Heart right ventricle (tissue), 16 donors: ENCODE measurements at regions of chr16 and their contacts with region 1.

Region 1: DNA sequence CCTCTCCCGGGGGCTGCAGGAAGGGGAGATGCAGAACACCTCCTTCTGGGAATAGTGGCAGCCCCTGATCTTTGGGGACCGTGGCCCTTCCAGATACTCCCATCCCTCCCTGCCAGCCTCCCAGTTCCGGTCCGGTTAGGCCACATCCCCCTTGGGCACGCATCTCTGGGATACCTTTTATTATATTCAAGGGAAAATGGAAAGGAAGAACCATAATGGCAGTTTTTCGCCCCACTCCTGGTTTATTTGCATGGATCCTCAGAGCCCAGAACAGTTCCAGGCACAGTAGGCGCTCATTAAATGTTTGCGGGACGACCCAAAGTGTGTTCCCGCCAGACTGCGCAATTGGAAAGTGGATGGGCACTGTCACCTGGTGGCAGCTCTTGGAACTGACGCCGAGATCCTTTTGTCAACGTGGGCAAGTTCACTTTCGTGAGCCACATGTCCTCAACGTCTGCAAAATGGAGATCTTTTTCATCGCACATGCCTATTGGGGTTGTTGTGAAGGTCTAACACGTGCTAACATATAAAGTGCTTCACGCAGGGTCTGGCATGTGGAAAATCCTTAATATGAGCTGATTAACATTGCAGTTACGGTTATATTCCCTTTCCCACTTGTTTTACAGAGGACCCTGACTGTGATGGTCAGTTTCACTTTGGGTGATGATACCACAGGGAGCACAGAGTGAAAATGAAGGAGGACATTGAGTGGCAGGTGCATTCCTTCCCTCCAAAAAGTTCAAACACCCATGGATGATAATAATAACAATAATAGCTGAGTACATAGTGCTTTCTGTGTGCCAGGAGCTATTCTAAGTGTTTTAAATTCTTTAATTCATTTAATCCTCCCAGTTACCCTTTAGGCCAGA is 1.7 kb upstream of the GPRC5B start:
- DNase-seq: peak; percentile 77 to 78
- ATAC-seq: peak; percentile 22 to 69 (median 42)
- H3K4me3 ChIP-seq: peak overlapping the region in 8 of 10 donors; percentile 74 to 97 (median 88)
- H3K27ac ChIP-seq: no peak overlapping the region
- H3K4me1 ChIP-seq: peaks cover 0 to 34% (median 26%) of the 10 kb centered on the region in 9 donors
- H3K27me3 ChIP-seq: peaks cover 0 to 39% (median 0%) of the 10 kb centered on the region in 7 donors
- CTCF ChIP-seq: peak; percentile 99 to 100 (median 100)

Region 2: GRCh38 chr16:19583665-19584300 is 302.5 kb before region 1 on chr16:
- intact Hi-C with region 1: loop called in 1 of 10 experiments (anchors 5 kb)
- DNase-seq: peak in 1 of 2 donors; percentile 23
- ATAC-seq: peak in 3 of 8 donors; percentile 38 to 54 (median 47)
- H3K4me3 ChIP-seq: no peak overlapping the region
- H3K27ac ChIP-seq: no peak overlapping the region
- H3K4me1 ChIP-seq: peaks cover 0 to 9% (median 0%) of the 10 kb centered on the region in 9 donors
- H3K27me3 ChIP-seq: no peaks in the 10 kb centered on the region
- CTCF ChIP-seq: peak; percentile 48 to 88 (median 82)

Region 3: GRCh38 chr16:19645557-19645981 is 240.7 kb before region 1 on chr16:
- intact Hi-C with region 1: loop called in 1 of 10 experiments (anchors 5 kb)
- DNase-seq: peak; percentile 71 to 77
- ATAC-seq: peak; percentile 74 to 91 (median 82)
- H3K4me3 ChIP-seq: peak overlapping the region in 9 of 10 donors; percentile 4 to 38 (median 31)
- H3K27ac ChIP-seq: peak overlapping the region; percentile 40 to 90 (median 77)
- H3K4me1 ChIP-seq: peaks cover 5 to 37% (median 14%) of the 10 kb centered on the region in 9 donors
- H3K27me3 ChIP-seq: no peaks in the 10 kb centered on the region
- CTCF ChIP-seq: no peak

Region 4: DNA sequence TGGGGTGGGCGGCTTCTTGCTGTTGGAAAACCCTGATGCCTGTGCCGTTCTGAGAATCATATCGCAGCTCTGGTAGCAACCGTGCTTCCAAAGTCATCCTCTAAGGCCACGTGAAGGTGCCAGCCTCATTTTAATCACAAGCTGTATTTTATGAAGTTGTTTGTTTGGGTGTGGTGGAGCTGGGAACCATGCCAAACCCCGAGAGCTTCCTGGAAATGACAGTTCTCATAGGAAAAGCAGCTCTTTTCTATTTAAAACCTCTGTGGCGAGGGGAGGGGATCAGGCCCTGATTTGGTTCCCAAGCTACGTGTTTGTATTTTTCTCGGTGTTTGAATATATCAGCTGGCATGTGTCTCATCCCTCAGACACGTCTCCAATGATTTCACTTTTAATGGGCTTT is 190.0 kb before region 1 on chr16:
- intact Hi-C with region 1: loop called in 1 of 10 experiments (anchors 2 kb)
- DNase-seq: peak; percentile 71 to 92
- ATAC-seq: peak; percentile 56 to 78 (median 68)
- H3K4me3 ChIP-seq: peak overlapping the region in 1 of 10 donors; percentile 7
- H3K27ac ChIP-seq: peak overlapping the region; percentile 69 to 93 (median 84)
- H3K4me1 ChIP-seq: peaks cover 8 to 64% (median 55%) of the 10 kb centered on the region in 9 donors
- H3K27me3 ChIP-seq: no peaks in the 10 kb centered on the region
- CTCF ChIP-seq: no peak

Region 5: DNA sequence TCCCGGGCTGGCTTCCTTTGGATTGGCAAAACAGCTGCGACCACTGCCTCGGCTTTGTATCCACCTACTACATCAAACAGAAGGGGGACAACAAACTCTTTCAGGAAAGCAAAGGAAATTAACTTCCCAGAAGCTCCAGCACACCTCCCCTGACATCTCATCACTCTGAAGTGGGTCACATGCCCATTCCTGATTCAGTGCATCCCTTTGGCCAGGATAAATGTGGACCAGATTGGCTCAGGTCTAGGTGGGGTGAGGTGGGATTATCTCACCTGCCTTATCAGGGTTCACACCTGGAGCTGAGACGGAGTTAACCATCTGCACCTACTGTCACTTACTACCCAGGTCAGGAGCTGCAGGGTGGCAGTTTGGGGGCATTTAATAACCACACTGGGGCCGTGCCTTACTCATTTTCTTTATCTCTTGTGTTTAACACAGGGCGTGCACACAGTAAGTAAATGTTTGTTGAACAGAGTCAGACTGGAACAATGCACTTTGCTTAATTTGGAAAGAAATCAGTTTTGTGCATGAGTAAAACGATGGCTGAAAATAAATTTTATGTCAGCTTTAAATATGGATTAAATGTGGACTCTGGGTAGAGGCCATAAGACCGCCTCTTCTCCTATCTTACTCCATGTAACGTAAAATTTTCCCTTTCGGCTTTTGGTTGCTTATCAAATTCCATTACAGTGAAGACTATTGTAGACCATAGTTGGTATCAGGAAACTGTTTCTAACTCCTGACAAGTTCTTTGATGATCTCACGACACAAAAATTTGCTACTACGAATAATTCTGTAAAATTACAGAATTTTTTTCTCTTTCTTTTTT is 132.3 kb before region 1 on chr16:
- intact Hi-C with region 1: loop called in 1 of 10 experiments (anchors 5 kb)
- DNase-seq: no peak
- ATAC-seq: peak in 7 of 8 donors; percentile 56 to 87 (median 69)
- H3K4me3 ChIP-seq: no peak overlapping the region
- H3K27ac ChIP-seq: peak overlapping the region; percentile 8 to 88 (median 80)
- H3K4me1 ChIP-seq: peaks cover 0 to 83% (median 34%) of the 10 kb centered on the region in 9 donors
- H3K27me3 ChIP-seq: no peaks in the 10 kb centered on the region
- CTCF ChIP-seq: no peak

Region 6: DNA sequence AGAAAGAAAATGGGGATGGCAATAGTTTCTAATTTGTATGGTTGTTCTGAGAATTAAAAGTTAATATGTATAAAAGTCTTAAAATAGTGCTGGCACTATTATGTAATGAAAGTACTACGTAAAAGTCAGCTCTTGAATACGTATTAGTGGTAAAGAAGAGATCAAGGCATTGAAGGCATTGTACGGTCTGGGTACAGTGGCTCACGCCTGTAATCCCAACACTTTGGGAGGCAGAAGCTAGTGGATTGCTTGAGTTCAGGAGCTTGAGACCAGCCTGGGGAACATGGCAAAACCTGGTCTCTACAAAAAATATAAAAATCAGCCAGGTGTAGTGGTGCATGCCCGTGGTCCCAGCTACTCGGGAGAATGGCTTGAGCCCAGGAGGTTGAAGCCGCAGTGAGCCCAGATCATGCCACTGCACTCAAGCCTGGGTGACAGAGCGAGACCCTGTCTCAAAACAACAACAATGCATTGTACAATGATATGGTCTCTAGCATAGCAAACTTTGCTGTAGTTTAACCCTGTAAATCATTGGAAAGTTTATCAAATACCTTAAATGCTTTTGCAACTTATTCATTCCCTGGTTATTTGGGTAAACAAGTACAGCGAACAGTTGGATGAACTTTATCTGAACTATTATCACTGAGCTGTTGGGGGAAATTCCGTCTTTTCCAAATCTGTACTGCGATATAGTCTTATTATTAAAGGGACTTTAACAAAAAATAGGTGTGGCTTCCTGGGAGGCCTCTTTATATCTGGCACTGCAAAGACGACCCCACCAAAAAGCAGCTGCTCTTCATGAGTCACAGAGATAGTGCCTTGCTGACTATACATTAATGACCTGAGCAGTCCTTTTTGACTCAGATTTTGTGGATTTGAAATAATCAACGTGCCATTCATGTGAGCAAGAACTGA is 75.2 kb before region 1 on chr16:
- intact Hi-C with region 1: loop called in 1 of 10 experiments (anchors 5 kb)
- DNase-seq: no peak
- ATAC-seq: peak in 4 of 8 donors; percentile 16 to 64 (median 28)
- H3K4me3 ChIP-seq: no peak overlapping the region
- H3K27ac ChIP-seq: peak overlapping the region in 6 of 10 donors; percentile 13 to 64 (median 42)
- H3K4me1 ChIP-seq: peaks cover 0 to 47% (median 28%) of the 10 kb centered on the region in 9 donors
- H3K27me3 ChIP-seq: no peaks in the 10 kb centered on the region
- CTCF ChIP-seq: no peak